ENCODE measurements at regions of chr3 and their contacts with region 1.

Region 1: DNA sequence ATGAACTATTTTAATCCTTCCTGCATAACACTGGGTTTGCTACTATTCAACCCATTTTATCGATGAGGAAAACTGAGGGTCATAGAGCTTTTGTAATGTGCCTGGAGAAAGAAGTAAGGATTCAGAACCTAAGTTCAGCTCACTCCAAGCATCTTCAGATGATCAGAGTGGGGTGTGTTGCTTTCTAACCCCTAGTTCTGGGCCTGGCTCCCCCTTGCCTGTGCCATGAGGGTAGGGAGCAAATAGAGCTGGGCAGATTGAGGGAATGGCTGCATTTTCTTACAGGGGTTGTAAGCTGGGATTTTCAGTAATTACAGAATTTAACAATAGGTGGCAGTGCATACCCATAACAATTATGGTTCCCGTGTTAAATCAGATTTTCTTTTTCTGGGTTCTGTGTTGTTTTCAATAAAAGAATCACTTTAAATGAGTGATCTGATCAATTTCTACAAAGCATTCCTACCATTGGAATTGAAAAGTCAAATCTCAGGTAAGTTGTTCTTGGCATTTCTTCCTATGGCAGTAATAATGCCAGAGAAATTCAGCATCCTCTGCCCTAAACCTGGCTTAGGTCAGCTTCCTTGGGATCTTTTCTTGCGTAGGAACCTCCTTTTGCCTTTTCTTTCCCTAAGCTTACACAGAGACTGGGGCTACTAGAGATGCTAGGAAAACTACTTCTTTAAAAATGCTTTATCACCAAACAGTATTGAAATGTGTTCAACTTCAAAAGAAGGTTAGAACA is 103.8 kb upstream of the IL12A start:
- DNase-seq: no peak
- H3K4me3 ChIP-seq: no peak overlapping the region
- H3K27ac ChIP-seq: no peak overlapping the region
- H3K27me3 ChIP-seq: no peaks in the 10 kb centered on the region
- CTCF ChIP-seq: peak; percentile 58

Region 2: GRCh38 chr3:159586571-159587202 is 298.1 kb before region 1 on chr3:
- CTCF ChIA-PET with region 1: no interaction called
- POLR2A ChIA-PET with region 1: no interaction called
- DNase-seq: peak; percentile 11
- H3K4me3 ChIP-seq: no peak overlapping the region
- H3K27ac ChIP-seq: no peak overlapping the region
- H3K27me3 ChIP-seq: peaks cover 3% of the 10 kb centered on the region
- CTCF ChIP-seq: peak; percentile 77

Region 3: DNA sequence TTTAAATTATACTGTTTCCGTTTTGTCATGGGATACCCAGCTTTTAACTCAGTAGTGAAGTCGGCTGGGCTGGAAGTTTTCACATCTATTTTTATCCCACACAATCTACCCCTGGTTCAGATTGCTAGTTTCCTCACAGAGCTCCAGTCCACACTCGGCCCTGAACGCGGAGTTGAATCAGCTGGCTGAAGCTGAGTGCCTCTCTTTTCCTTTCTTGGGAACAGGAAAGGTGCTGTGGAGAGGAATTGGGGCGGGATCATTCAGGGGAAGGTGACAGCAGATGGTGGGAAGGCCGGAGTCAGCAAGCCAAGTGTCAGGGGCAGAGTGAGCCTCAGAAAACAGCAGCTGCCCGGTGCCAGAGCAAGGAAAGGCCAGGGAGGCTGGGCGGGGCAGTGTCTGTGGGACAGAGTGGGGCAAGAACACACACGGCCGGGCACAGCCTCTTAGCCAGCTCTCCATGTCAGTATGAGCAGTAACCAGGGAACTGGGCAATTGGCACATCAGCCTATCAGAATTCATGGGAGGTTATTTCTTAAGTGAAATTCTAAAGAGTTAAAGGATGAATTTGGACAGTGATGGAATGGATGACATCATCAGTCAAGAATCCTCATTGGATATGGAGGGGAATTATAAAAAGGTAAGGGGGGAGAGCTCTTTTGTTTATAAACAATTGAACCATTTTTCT is 31.9 kb before region 1 on chr3:
- CTCF ChIA-PET with region 1: interaction called, 13 read pairs
- POLR2A ChIA-PET with region 1: interaction called, 11 read pairs
- DNase-seq: no peak
- H3K4me3 ChIP-seq: peak overlapping the region; percentile 44
- H3K27ac ChIP-seq: peak overlapping the region; percentile 94
- H3K27me3 ChIP-seq: no peaks in the 10 kb centered on the region
- CTCF ChIP-seq: no peak

Region 4: GRCh38 chr3:159897331-159898075 is 12.7 kb after region 1 on chr3:
- CTCF ChIA-PET with region 1: interaction called, 71 read pairs
- POLR2A ChIA-PET with region 1: interaction called, 3 read pairs
- DNase-seq: no peak
- H3K4me3 ChIP-seq: no peak overlapping the region
- H3K27ac ChIP-seq: no peak overlapping the region
- H3K27me3 ChIP-seq: no peaks in the 10 kb centered on the region
- CTCF ChIP-seq: no peak

Region 5: DNA sequence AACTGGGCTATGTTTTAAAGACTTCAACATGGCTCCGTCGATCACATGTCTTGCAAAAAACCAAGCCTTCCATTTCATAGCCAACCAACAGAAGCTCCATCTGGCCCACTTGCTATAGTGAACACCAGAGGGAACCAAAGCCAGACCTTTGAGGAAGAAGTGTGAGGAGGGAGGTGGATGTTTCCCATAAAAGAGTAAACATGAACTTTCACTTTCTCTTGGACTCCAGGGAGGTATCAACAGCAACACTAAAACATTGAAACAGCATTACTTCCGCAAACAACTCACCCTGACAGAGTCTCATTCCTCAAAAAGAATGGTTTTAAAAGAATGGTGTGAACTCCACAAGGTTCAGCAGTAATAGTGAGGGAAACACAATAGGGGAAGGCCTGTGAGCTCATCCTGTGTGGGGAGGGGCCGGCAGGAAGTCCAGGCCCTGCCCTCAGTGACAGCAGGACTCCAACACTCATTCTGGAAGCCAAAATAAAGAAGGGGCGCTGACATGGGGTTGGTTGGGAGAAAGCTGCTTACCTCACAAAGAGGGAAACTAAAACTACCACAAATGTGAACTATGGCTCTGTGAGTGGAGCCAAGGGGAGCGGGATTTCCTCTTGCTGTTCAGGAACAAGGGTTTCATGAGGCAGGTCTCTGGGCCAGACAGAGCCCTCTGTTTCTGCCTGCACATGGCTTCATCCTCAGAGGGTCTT is 44.8 kb after region 1 on chr3:
- CTCF ChIA-PET with region 1: interaction called, 41 read pairs
- POLR2A ChIA-PET with region 1: interaction called, 4 read pairs
- DNase-seq: peak; percentile 58
- H3K4me3 ChIP-seq: no peak overlapping the region
- H3K27ac ChIP-seq: peak overlapping the region; percentile 92
- H3K27me3 ChIP-seq: no peaks in the 10 kb centered on the region
- CTCF ChIP-seq: peak; percentile 69

Region 6: GRCh38 chr3:160027541-160028195 is 142.8 kb after region 1 on chr3:
- CTCF ChIA-PET with region 1: interaction called, 27 read pairs
- POLR2A ChIA-PET with region 1: interaction called, 3 read pairs
- DNase-seq: peak; percentile 62
- H3K4me3 ChIP-seq: no peak overlapping the region
- H3K27ac ChIP-seq: peak overlapping the region; percentile 97
- H3K27me3 ChIP-seq: no peaks in the 10 kb centered on the region
- CTCF ChIP-seq: no peak

Region 7: DNA sequence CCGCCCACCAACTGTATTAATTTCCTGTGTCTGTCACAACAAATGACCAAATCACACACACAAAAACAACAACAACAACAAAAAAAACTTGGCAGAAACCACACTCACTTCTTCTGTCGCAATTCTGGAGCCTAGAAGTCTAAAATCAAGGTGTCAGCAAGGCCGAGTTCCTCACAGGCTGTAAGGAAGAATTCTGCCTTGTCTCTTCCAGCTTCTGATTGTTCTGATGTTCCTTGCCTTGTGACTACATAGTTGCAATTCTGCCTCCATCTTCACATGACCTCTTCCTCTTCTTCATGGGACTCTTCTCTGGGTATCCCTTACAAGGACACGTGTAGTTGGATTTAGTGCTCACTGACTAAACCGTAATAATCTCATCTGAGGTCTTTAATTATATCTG is 165.2 kb after region 1 on chr3:
- CTCF ChIA-PET with region 1: no interaction called
- POLR2A ChIA-PET with region 1: no interaction called
- DNase-seq: no peak
- H3K4me3 ChIP-seq: no peak overlapping the region
- H3K27ac ChIP-seq: no peak overlapping the region
- H3K27me3 ChIP-seq: no peaks in the 10 kb centered on the region
- CTCF ChIP-seq: no peak

Region 8: GRCh38 chr3:160061525-160061924 is 176.7 kb after region 1 on chr3:
- CTCF ChIA-PET with region 1: no interaction called
- POLR2A ChIA-PET with region 1: no interaction called
- DNase-seq: no peak
- H3K4me3 ChIP-seq: no peak overlapping the region
- H3K27ac ChIP-seq: no peak overlapping the region
- H3K27me3 ChIP-seq: peaks cover 2% of the 10 kb centered on the region
- CTCF ChIP-seq: no peak

Region 9: DNA sequence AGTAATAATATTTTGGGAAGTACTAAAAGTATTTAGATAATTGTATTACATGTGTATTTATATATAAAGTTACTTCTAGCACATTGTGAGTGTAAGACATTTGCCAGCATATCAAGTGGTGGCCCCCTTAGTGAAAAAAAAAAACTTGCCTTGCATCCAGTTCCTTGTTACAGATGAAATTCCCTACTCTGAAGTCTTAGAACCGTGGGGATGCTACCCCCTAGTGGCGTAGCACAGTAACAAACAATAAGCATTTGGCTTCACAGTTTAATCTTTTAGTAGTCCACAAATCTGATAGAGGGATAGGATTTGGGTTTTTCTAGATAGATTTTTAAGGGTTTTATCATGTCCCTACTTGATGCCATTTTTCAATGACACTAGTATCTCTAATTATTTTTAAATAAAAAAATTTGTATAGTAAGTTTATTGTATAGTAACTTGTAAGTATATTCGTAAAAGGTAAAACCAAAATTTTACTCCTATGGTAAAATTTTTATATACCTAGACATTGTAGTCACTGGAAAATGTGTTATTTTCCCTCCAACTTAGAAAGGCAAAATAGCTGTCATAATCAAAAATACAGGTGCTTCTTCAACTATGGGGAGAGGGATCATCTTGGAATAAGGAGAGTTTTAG is 528.9 kb after region 1 on chr3:
- CTCF ChIA-PET with region 1: interaction called, 19 read pairs
- POLR2A ChIA-PET with region 1: interaction called, 5 read pairs
- DNase-seq: peak; percentile 74
- H3K4me3 ChIP-seq: no peak overlapping the region
- H3K27ac ChIP-seq: no peak overlapping the region
- H3K27me3 ChIP-seq: no peaks in the 10 kb centered on the region
- CTCF ChIP-seq: peak; percentile 93